Activated CD8-positive, alpha-beta memory T cell treated with anti-CD3 and anti-CD28 coated beads, Interleukin-2, amount 10 ng/mL, durations not matched to agents 7 days and 5 days (primary cell): ENCODE measurements at regions of chr20 and their contacts with region 1.

Region 1: DNA sequence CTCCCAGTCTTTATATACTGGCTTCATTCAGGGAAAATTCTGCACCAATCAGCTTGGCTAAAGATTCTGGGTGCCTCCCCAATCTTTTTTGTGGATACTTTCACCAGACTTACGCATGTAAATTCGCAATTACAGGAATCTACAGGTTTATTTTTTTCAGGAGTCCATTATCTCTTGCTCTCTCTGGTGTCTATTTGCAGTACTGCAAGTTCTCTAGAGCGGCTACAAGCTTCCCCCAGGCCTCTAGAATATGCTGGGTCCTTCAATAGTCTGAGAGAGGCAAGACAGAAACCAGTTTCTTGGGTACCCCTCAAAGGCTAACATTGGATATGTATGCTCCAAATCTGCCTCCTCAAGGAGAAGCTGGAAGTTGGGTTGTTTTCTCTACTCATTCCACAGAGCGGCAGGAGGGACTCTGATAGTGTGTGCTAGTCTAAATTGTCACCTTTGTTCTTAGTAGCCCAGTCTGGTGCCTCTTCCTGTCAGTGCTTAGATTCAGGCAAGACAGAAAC is 58.5 kb downstream of the SUN5 start:
- DNase-seq: no peak
- ATAC-seq: peak; percentile 93
- H3K4me3 Mint-ChIP-seq: no peak overlapping the region
- H3K27ac Mint-ChIP-seq: peak overlapping the region; percentile 76
- H3K4me1 Mint-ChIP-seq: peaks cover 15% of the 10 kb centered on the region
- H3K27me3 Mint-ChIP-seq: peaks cover 2% of the 10 kb centered on the region

Region 2: GRCh38 chr20:32762149-32762753 is 183.5 kb before region 1 on chr20 and contains the start of gene DNMT3B:
- CTCF ChIA-PET with region 1: no interaction called
- DNase-seq: peak; percentile 83
- ATAC-seq: peak; percentile 86
- H3K4me3 Mint-ChIP-seq: peak within 1 kb of the TSS; percentile 75
- H3K27ac Mint-ChIP-seq: peak within 1 kb of the TSS; percentile 66
- H3K4me1 Mint-ChIP-seq: peaks cover 18% of the 10 kb centered on the region
- H3K27me3 Mint-ChIP-seq: peaks cover 9% of the 10 kb centered on the region
- total RNA-seq, gene DNMT3B: 3.3 to 4.7 TPM

Region 3: DNA sequence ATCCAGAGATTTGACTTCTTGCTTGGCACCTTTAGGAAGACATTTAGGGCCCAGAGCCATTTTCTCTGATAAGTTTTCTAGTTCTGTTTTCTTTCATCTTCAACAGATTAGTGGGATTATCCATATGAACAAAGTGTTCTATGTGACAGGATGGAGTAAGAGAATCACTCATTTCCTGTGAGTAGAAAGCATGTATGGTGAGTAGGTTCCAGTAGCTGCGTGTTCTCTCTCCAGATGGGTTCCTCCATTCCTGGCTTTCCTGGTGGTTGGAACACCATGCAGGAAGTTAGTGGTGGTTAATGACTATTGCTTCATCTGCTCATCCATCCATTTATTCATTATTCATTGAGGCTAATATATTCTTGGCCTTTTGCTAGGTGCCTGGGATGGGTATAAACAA is 33.1 kb before region 1 on chr20:
- CTCF ChIA-PET with region 1: no interaction called
- DNase-seq: no peak
- ATAC-seq: no peak
- H3K4me3 Mint-ChIP-seq: no peak overlapping the region
- H3K27ac Mint-ChIP-seq: no peak overlapping the region
- H3K4me1 Mint-ChIP-seq: no peaks in the 10 kb centered on the region
- H3K27me3 Mint-ChIP-seq: no peaks in the 10 kb centered on the region

Region 4: GRCh38 chr20:32959351-32960221 is 13.8 kb after region 1 on chr20:
- CTCF ChIA-PET with region 1: interaction called, 13 read pairs
- DNase-seq: no peak
- ATAC-seq: no peak
- H3K4me3 Mint-ChIP-seq: no peak overlapping the region
- H3K27ac Mint-ChIP-seq: no peak overlapping the region
- H3K4me1 Mint-ChIP-seq: peaks cover 22% of the 10 kb centered on the region
- H3K27me3 Mint-ChIP-seq: no peaks in the 10 kb centered on the region

Region 5: GRCh38 chr20:32966881-32967781 is 21.4 kb after region 1 on chr20:
- CTCF ChIA-PET with region 1: interaction called, 14 read pairs
- DNase-seq: peak; percentile 91
- ATAC-seq: peak; percentile 58
- H3K4me3 Mint-ChIP-seq: peak overlapping the region; percentile 60
- H3K27ac Mint-ChIP-seq: peak overlapping the region; percentile 96
- H3K4me1 Mint-ChIP-seq: peaks cover 80% of the 10 kb centered on the region
- H3K27me3 Mint-ChIP-seq: no peaks in the 10 kb centered on the region

Region 6: GRCh38 chr20:33005132-33005566 is 59.4 kb after region 1 on chr20:
- CTCF ChIA-PET with region 1: interaction called, 25 read pairs
- DNase-seq: no peak
- ATAC-seq: no peak
- H3K4me3 Mint-ChIP-seq: no peak overlapping the region
- H3K27ac Mint-ChIP-seq: no peak overlapping the region
- H3K4me1 Mint-ChIP-seq: peaks cover 3% of the 10 kb centered on the region
- H3K27me3 Mint-ChIP-seq: no peaks in the 10 kb centered on the region